Cardiac septum (tissue), 1 donor: ENCODE measurements at regions of chr13 and their contacts with region 1.

Region 1: GRCh38 chr13:49098771-49099512 is 121.2 kb upstream of the MLNR start:
- DNase-seq: no peak

Region 2: DNA sequence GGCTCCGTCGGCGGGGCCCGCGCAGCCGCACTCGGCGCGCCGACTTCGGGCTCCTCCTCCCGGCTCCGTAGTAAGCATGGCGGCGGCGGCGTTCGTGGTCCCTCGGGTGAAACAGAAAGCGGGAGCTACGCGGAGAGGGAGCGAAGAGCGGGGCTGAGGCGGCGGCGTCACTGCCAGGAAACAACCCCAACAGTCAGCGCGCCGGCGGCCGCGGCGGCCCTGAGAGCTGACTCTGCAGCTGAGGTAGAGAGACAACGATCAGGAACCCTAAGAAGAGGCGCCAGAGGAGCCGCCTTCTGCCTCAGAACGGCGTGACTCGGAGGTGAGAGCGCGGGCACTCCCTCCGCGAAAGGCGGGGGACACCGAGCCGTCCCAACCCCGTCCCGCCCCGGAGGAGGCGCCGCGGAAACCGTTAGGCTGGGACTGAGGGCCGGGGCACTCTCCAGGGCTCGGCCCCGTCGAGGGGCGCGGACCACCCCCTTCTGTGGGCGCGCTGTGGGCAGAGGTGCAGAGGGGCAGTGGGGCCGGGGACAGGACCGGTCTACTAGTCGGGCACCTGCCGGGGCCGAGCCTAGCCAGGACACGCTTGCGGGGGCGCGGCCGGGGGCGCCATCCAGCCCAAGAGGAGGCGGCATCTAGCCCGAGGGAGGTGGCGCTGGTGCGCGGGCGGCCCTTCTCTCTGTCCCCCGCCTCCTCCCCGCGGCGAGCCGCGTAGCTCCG is 122.9 kb before region 1 on chr13 and contains the start of gene FNDC3A:
- intact Hi-C with region 1: loop called (anchors 5 kb)
- DNase-seq: peak; percentile 92
- total RNA-seq, gene FNDC3A: 27.3 TPM

Region 3: GRCh38 chr13:49247643-49248621 is 149.0 kb after region 1 on chr13 and contains the start of gene CDADC1:
- intact Hi-C with region 1: loop called (anchors 10 kb)
- DNase-seq: peak; percentile 99
- total RNA-seq, gene CDADC1: 7.1 TPM